B cell (primary cell): ENCODE measurements at regions of chr15 and their contacts with region 1.

Region 1: GRCh38 chr15:31128919-31129768 is 27.6 kb upstream of the TRPM1 start:
- DNase-seq: peak; percentile 85
- ATAC-seq: peak; percentile 89
- H3K4me3 ChIP-seq: peak overlapping the region in 1 of 5 experiments; percentile 15
- H3K4me3 Mint-ChIP-seq: peak overlapping the region; percentile 0
- H3K27ac ChIP-seq: no peak overlapping the region
- H3K27ac Mint-ChIP-seq: peak overlapping the region; percentile 4
- H3K4me1 ChIP-seq: peaks cover 11 to 13% of the 10 kb centered on the region in 2 donors
- H3K4me1 Mint-ChIP-seq: peaks cover 13% of the 10 kb centered on the region
- H3K27me3 ChIP-seq: no peaks in the 10 kb centered on the region
- H3K27me3 Mint-ChIP-seq: no peaks in the 10 kb centered on the region
- CTCF ChIP-seq: peak; percentile 94

Region 2: DNA sequence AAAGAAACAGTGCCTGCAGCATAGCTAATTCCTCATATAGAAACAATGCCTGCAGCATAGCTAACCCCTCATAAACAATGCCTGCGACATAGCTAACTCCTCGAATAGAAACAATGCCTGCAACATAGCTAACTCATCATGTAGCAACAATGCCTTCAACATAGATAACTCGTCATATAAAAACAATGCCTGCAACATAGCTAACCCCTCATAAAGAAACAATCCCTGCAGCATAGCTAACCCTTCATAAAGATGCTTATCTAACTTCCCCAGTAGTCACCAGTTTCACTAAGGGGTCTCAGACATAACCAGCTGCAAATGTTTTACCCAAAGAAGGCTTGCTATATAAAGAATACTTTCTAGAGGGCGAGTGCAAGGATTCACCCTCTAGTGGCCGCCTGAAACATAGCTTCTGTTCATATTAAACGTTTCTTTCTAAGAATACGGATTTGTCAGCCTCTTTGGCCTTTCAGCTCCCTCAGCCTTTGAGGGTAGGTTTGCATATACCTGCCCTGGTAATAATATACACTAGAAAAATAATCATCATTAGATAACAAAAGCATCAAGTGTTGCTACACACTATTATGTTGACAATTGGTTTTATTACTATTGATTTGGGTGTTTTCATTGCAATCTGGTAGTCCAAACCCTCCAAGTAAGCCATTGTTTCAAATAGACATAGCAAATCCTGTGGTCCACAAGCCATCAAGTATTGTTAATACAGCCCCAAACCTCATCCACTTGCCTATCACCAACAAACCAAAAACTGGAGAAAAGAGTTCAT is 269.9 kb before region 1 on chr15:
- CTCF ChIA-PET with region 1: interaction called, 36 read pairs
- POLR2A ChIA-PET with region 1: no interaction called
- intact Hi-C with region 1: no loop called
- DNase-seq: peak; percentile 38
- ATAC-seq: no peak
- H3K4me3 ChIP-seq: no peak overlapping the region
- H3K4me3 Mint-ChIP-seq: no peak overlapping the region
- H3K27ac ChIP-seq: no peak overlapping the region
- H3K27ac Mint-ChIP-seq: no peak overlapping the region
- H3K4me1 ChIP-seq: no peaks in the 10 kb centered on the region
- H3K4me1 Mint-ChIP-seq: peaks cover 4% of the 10 kb centered on the region
- H3K27me3 ChIP-seq: no peaks in the 10 kb centered on the region
- H3K27me3 Mint-ChIP-seq: no peaks in the 10 kb centered on the region
- CTCF ChIP-seq: peak; percentile 86

Region 3: DNA sequence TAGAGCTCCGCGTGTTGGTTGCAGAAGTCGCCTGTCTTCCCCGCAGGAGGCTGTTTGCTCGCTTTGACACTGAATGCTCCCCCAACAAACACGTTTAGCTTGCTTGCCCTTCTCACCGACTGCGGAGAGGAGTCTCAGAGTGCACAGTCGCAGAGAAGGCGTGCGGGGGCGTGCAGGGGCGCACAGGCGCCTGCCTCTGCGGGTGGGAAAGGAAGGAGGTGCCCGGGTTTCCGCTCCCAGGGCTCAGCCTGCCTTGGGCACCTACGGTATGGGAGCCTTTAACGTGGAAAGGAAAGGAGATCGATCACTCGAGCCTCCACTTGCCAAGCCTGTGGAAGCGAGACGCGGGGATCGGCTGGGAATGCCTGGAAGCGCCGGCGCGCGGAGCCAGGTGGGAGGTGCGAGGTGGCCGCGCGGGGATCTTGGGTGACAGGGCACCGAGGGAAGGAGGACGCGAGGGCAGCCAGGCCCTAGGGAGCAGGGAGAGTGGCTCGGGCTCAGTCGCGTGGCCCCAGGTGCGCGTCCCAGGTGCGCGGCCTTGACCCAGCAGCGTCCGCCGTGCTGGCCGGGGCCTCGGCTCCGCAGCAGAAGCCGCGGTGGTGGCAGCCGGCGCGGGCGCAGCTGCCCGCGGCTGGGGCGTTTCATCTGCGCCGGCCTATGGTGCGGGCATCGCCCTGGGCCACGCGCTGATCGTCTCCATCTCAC is 225.5 kb before region 1 on chr15 and contains the start of gene FAN1:
- CTCF ChIA-PET with region 1: interaction called, 25 read pairs
- POLR2A ChIA-PET with region 1: no interaction called
- intact Hi-C with region 1: no loop called
- DNase-seq: peak; percentile 79
- ATAC-seq: peak; percentile 93
- H3K4me3 ChIP-seq: peak within 1 kb of the TSS; percentile 62 to 84 (median 71)
- H3K4me3 Mint-ChIP-seq: peak within 1 kb of the TSS; percentile 93
- H3K27ac ChIP-seq: peak within 1 kb of the TSS in 1 of 2 donors; percentile 56
- H3K27ac Mint-ChIP-seq: peak within 1 kb of the TSS; percentile 83
- H3K4me1 ChIP-seq: peaks cover 0 to 6% of the 10 kb centered on the region in 2 donors
- H3K4me1 Mint-ChIP-seq: peaks cover 29% of the 10 kb centered on the region
- H3K27me3 ChIP-seq: no peaks in the 10 kb centered on the region
- H3K27me3 Mint-ChIP-seq: no peaks in the 10 kb centered on the region
- CTCF ChIP-seq: no peak
- total RNA-seq, gene FAN1: 20.5 and 21.3 TPM in 2 replicates

Region 4: GRCh38 chr15:30962079-30962478 is 167.1 kb before region 1 on chr15:
- CTCF ChIA-PET with region 1: interaction called, 73 read pairs
- POLR2A ChIA-PET with region 1: no interaction called
- intact Hi-C with region 1: no loop called
- DNase-seq: no peak
- ATAC-seq: no peak
- H3K4me3 ChIP-seq: no peak overlapping the region
- H3K4me3 Mint-ChIP-seq: no peak overlapping the region
- H3K27ac ChIP-seq: no peak overlapping the region
- H3K27ac Mint-ChIP-seq: no peak overlapping the region
- H3K4me1 ChIP-seq: no peaks in the 10 kb centered on the region
- H3K4me1 Mint-ChIP-seq: peaks cover 26% of the 10 kb centered on the region
- H3K27me3 ChIP-seq: no peaks in the 10 kb centered on the region
- H3K27me3 Mint-ChIP-seq: no peaks in the 10 kb centered on the region
- CTCF ChIP-seq: no peak

Region 5: DNA sequence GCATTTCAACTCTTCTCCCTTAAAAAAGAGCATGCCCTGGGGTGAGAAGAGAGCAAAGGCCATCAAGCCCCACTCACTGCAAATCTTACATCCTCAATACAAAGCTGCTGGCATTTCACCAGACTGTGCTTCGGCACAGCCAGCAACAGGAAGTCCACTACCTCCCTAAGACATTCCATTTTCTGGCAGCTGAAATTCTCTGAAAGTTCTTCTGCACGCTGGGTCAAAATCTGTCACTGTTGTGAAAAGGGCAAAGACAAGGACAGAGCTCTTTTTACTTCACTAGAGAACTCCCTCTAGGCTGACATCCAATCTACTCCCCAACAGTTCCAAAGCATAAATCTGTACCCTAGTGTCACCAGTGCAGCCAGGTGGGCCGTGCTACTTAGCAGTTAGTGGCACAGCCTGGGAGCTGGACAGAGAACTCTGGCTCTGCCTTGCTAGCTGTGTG is 144.0 kb before region 1 on chr15:
- CTCF ChIA-PET with region 1: interaction called, 21 read pairs
- POLR2A ChIA-PET with region 1: no interaction called
- intact Hi-C with region 1: no loop called
- DNase-seq: no peak
- ATAC-seq: peak; percentile 51
- H3K4me3 ChIP-seq: peak overlapping the region in 3 of 5 experiments; percentile 26 to 36 (median 30)
- H3K4me3 Mint-ChIP-seq: peak overlapping the region; percentile 75
- H3K27ac ChIP-seq: peak overlapping the region; percentile 25 to 67
- H3K27ac Mint-ChIP-seq: peak overlapping the region; percentile 26
- H3K4me1 ChIP-seq: peaks cover 60 to 66% of the 10 kb centered on the region in 2 donors
- H3K4me1 Mint-ChIP-seq: peaks cover 77% of the 10 kb centered on the region
- H3K27me3 ChIP-seq: no peaks in the 10 kb centered on the region
- H3K27me3 Mint-ChIP-seq: no peaks in the 10 kb centered on the region
- CTCF ChIP-seq: no peak

Region 6: GRCh38 chr15:31013538-31014228 is 115.5 kb before region 1 on chr15:
- CTCF ChIA-PET with region 1: interaction called, 15 read pairs
- POLR2A ChIA-PET with region 1: no interaction called
- intact Hi-C with region 1: no loop called
- DNase-seq: peak; percentile 65
- ATAC-seq: peak; percentile 95
- H3K4me3 ChIP-seq: peak overlapping the region in 1 of 5 experiments; percentile 23
- H3K4me3 Mint-ChIP-seq: peak overlapping the region; percentile 70
- H3K27ac ChIP-seq: peak overlapping the region; percentile 68 to 73
- H3K27ac Mint-ChIP-seq: peak overlapping the region; percentile 96
- H3K4me1 ChIP-seq: peaks cover 30 to 40% of the 10 kb centered on the region in 2 donors
- H3K4me1 Mint-ChIP-seq: peaks cover 43% of the 10 kb centered on the region
- H3K27me3 ChIP-seq: no peaks in the 10 kb centered on the region
- H3K27me3 Mint-ChIP-seq: no peaks in the 10 kb centered on the region
- CTCF ChIP-seq: no peak

Region 7: GRCh38 chr15:31268911-31269784 is 140.0 kb after region 1 on chr15:
- CTCF ChIA-PET with region 1: no interaction called
- POLR2A ChIA-PET with region 1: no interaction called
- intact Hi-C with region 1: no loop called
- DNase-seq: no peak
- ATAC-seq: no peak
- H3K4me3 ChIP-seq: no peak overlapping the region
- H3K4me3 Mint-ChIP-seq: no peak overlapping the region
- H3K27ac ChIP-seq: no peak overlapping the region
- H3K27ac Mint-ChIP-seq: peak overlapping the region; percentile 53
- H3K4me1 ChIP-seq: peaks cover 57 to 68% of the 10 kb centered on the region in 2 donors
- H3K4me1 Mint-ChIP-seq: peaks cover 69% of the 10 kb centered on the region
- H3K27me3 ChIP-seq: no peaks in the 10 kb centered on the region
- H3K27me3 Mint-ChIP-seq: no peaks in the 10 kb centered on the region
- CTCF ChIP-seq: no peak